Aorta (tissue), 5 donors: ENCODE measurements at regions of chr10 and their contacts with region 1.

Region 1: GRCh38 chr10:51074238-51075028 is at the start of gene PRKG1:
- DNase-seq: peak; percentile 90 to 93
- ATAC-seq: peak; percentile 92
- H3K4me3 ChIP-seq: peak within 1 kb of the TSS; percentile 79 to 82
- H3K27ac ChIP-seq: peak within 1 kb of the TSS; percentile 83 to 89
- H3K4me1 ChIP-seq: peaks cover 0 to 2% of the 10 kb centered on the region in 2 donors
- H3K27me3 ChIP-seq: no peaks in the 10 kb centered on the region
- total RNA-seq, gene PRKG1: 153 to 199 TPM

Region 2: DNA sequence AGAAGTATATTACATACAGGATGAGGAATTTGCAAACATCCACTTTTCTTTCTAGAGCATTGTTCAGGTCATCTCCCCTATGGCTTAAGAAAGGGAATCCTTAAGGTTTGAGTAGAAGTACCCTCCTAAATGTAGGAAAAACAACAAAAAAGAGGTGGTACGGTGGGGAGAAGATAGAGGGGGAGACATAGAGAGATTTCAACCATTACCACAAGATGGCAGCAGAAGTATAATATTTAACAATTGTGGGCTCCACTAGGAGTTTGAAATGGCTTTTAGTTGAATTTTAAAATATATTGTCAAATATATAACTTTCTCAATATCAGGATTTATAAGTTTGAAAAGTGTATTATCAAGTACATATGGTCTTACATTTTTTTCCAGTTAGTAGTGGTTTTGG is 72.8 kb before region 1 on chr10:
- intact Hi-C with region 1: loop called in 1 of 2 experiments (anchors 5 kb)
- DNase-seq: no peak
- ATAC-seq: peak; percentile 62
- H3K4me3 ChIP-seq: no peak overlapping the region
- H3K27ac ChIP-seq: peak overlapping the region in 1 of 2 donors; percentile 67
- H3K4me1 ChIP-seq: peaks cover 4 to 7% of the 10 kb centered on the region in 2 donors
- H3K27me3 ChIP-seq: no peaks in the 10 kb centered on the region

Region 3: DNA sequence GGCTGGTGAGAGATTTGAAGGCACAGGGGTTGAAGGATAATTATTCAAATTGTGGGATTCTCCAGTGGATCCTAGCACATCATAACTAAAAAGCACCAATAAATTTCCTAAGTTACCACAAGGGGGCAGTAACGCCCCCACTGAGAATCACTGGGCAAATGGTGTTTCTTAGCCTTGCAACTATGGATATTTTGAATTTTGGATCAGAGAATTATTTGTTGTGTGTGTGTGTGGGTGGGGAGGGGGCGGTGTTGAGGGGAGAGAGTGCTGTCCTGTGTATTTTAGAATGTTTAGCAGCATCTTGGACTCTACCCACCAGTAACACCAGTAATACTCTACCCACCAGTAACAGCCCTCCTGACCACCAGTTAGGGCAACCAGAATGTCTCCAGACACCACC is 63.5 kb before region 1 on chr10:
- intact Hi-C with region 1: loop called in 1 of 2 experiments (anchors 10 kb)
- DNase-seq: no peak
- ATAC-seq: no peak
- H3K4me3 ChIP-seq: no peak overlapping the region
- H3K27ac ChIP-seq: no peak overlapping the region
- H3K4me1 ChIP-seq: peaks cover 11 to 19% of the 10 kb centered on the region in 2 donors
- H3K27me3 ChIP-seq: no peaks in the 10 kb centered on the region

Region 4: DNA sequence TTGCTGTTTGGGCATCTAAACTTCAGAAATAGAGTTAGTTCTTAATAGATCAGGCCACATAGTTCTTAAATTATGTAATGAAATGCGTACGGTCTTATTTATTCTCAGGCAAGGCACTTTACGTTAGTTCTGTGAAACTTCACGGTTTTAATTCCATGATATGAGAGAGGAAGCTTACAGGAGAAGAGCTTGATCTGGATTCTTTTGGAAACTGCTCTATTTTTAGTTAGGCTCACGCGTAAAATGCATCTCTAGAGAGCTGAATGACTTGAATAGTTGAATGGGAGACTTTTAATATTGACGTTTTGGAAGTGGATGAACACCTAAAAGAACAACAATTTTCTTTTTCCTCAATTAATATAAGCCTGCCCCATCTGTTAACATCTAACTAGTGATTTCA is 70.9 kb after region 1 on chr10:
- intact Hi-C with region 1: no loop called
- DNase-seq: no peak
- ATAC-seq: no peak
- H3K4me3 ChIP-seq: no peak overlapping the region
- H3K27ac ChIP-seq: no peak overlapping the region
- H3K4me1 ChIP-seq: peaks cover 0 to 3% of the 10 kb centered on the region in 2 donors
- H3K27me3 ChIP-seq: no peaks in the 10 kb centered on the region

Region 5: DNA sequence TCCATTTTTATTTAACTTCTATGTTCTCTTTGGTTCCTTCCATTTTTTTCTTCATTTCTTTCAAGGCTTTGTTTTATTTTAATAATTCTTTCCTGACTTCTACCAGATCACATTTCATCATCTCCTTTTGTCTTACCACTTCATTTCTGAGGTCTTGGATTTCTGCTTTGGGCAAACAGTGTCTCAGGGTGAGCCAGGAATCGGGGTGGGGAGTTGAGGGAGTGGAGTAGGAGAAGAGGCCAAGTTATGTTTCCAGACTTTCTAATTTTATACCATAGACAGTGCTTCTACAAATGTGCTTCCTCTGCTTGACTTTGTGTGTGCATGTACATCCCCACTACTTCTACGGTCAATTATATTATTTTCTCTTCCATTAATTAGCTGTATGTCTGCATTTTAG is 111.9 kb after region 1 on chr10:
- intact Hi-C with region 1: no loop called
- DNase-seq: peak in 1 of 2 donors; percentile 42
- ATAC-seq: no peak
- H3K4me3 ChIP-seq: no peak overlapping the region
- H3K27ac ChIP-seq: peak overlapping the region in 1 of 2 donors; percentile 51
- H3K4me1 ChIP-seq: peaks cover 3 to 7% of the 10 kb centered on the region in 2 donors
- H3K27me3 ChIP-seq: no peaks in the 10 kb centered on the region

Region 6: DNA sequence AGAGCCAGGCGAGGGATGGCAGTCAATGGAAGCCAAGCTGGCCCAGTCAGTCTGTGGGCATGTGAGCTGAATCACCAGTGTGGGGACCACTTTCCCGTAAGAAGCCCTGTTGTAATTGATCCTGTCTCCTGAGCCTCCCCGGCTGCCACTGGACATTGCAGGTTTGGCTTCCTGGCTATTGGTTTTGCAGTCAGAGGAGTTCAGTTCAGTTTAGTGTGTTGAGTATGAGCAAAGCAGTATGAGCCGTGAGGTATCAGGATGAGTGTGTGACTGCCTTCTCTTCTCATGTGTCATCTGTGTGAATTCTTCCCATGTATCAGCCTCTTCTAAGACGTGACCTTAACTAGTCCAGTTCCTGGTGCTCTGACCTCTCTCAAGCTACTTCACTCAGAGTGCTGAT is 227.2 kb after region 1 on chr10:
- intact Hi-C with region 1: loop called in 1 of 2 experiments (anchors 10 kb)
- DNase-seq: peak in 1 of 2 donors; percentile 73
- ATAC-seq: peak; percentile 54
- H3K4me3 ChIP-seq: no peak overlapping the region
- H3K27ac ChIP-seq: peak overlapping the region; percentile 85 to 100
- H3K4me1 ChIP-seq: peaks cover 7 to 16% of the 10 kb centered on the region in 2 donors
- H3K27me3 ChIP-seq: no peaks in the 10 kb centered on the region

Region 7: GRCh38 chr10:51389415-51390321 is 315.2 kb after region 1 on chr10:
- intact Hi-C with region 1: loop called in 1 of 2 experiments (anchors 10 kb)
- DNase-seq: peak in 1 of 2 donors; percentile 47
- ATAC-seq: no peak
- H3K4me3 ChIP-seq: no peak overlapping the region
- H3K27ac ChIP-seq: no peak overlapping the region
- H3K4me1 ChIP-seq: peaks cover 3 to 9% of the 10 kb centered on the region in 2 donors
- H3K27me3 ChIP-seq: no peaks in the 10 kb centered on the region

Region 8: DNA sequence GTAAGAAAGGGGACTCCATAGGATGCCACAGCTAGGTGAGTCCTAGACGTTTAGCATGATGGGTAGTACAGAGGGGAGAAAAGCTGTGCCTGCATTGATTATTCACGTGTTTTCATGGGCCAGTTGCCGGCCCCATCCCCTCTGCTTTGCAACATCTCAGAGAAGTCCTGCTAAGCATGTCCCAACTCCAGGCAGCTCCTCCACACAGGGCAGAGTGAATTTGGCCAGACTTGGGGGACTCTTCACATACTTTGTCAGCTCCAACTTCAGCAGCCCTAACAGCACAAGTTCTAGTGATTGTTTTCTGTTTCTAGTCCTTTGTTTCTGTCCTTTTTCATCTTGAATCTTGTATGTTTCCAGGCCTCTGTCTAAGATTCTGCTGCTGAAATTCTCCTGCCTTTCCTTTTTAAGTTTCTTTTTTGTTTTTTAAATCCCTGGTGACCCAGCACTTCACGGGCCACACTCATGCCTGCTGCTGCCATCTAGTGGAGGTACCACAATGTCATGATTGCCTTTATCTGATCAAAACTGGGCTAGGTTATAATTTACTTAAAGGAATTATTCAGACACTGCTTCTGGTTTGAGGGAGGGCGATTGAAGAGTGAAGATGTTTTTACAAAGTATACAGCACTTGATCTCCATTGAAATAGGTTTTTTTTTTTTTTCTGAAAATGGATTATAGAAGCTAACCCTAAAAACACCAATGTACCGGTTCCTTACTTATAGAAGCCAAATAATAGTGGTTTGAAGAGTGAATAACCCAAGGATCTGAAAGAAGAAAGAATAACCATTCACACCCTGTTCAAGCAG is 348.1 kb after region 1 on chr10:
- intact Hi-C with region 1: loop called in 1 of 2 experiments (anchors 10 kb)
- DNase-seq: peak; percentile 58 to 77
- ATAC-seq: peak; percentile 78
- H3K4me3 ChIP-seq: no peak overlapping the region
- H3K27ac ChIP-seq: peak overlapping the region; percentile 16 to 85
- H3K4me1 ChIP-seq: peaks cover 9 to 23% of the 10 kb centered on the region in 2 donors
- H3K27me3 ChIP-seq: no peaks in the 10 kb centered on the region

Region 9: GRCh38 chr10:51699475-51700227 is 625.2 kb after region 1 on chr10 and contains the start of gene CSTF2T:
- intact Hi-C with region 1: loop called in 1 of 2 experiments (anchors 10 kb)
- DNase-seq: peak; percentile 93
- ATAC-seq: peak; percentile 97
- H3K4me3 ChIP-seq: peak within 1 kb of the TSS; percentile 60 to 98
- H3K27ac ChIP-seq: peak within 1 kb of the TSS; percentile 80 to 99
- H3K4me1 ChIP-seq: peaks cover 0 to 4% of the 10 kb centered on the region in 2 donors
- H3K27me3 ChIP-seq: no peaks in the 10 kb centered on the region
- total RNA-seq, gene CSTF2T: 18.2 to 25.2 TPM